ENCODE measurements at regions of chr6 and their contacts with region 1.

Region 1: DNA sequence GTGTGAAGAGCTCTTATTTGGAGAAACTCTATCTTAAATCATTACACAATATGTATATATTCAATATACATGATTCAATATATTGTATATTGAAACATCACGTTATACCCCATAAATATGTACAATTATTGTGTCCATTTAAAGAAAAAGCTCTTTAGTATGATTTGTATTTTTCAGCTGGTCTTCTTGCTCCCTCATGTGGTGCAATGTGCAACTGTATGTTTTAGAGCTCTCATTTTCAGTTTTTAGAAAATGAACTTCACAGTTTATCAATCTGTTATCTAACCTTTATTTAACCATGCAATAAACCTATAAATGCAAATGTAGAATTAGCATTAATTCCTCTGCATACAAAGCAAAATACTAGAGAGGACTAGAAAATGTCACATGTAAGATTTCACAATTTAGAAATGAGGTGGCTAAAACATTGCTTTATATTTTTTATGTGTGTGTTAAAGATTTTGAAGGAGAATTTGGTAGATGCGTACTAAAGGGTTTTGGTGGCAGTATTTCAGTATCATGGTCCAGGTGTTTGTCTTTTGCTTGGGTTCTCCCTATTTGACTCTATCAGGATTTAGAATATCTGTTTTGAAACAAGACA is 167.1 kb downstream of the PHF3 start:
- H3K4me3 ChIP-seq: no peak overlapping the region
- H3K27ac ChIP-seq: no peak overlapping the region
- H3K4me1 ChIP-seq: peaks cover 9% of the 10 kb centered on the region
- CTCF ChIP-seq: no peak

Region 2: GRCh38 chr6:63307581-63308246 is 495.0 kb before region 1 on chr6:
- CTCF ChIA-PET with region 1: interaction called, 17 read pairs
- POLR2A ChIA-PET with region 1: no interaction called
- H3K4me3 ChIP-seq: no peak overlapping the region
- H3K27ac ChIP-seq: no peak overlapping the region
- H3K4me1 ChIP-seq: no peaks in the 10 kb centered on the region
- CTCF ChIP-seq: no peak

Region 3: GRCh38 chr6:63352587-63353285 is 450.0 kb before region 1 on chr6:
- CTCF ChIA-PET with region 1: interaction called, 87 read pairs
- POLR2A ChIA-PET with region 1: no interaction called
- H3K4me3 ChIP-seq: no peak overlapping the region
- H3K27ac ChIP-seq: no peak overlapping the region
- H3K4me1 ChIP-seq: no peaks in the 10 kb centered on the region; the same call in 1 of the 2 replicates
- CTCF ChIP-seq: peak; percentile 59

Region 4: GRCh38 chr6:63816982-63817436 is 14.3 kb after region 1 on chr6:
- CTCF ChIA-PET with region 1: interaction called, 40 read pairs
- POLR2A ChIA-PET with region 1: no interaction called
- H3K4me3 ChIP-seq: no peak overlapping the region
- H3K27ac ChIP-seq: no peak overlapping the region
- H3K4me1 ChIP-seq: no peaks in the 10 kb centered on the region
- CTCF ChIP-seq: no peak